Breast epithelium (tissue), 4 donors: ENCODE measurements at regions of chr7 and their contacts with region 1.

Region 1: DNA sequence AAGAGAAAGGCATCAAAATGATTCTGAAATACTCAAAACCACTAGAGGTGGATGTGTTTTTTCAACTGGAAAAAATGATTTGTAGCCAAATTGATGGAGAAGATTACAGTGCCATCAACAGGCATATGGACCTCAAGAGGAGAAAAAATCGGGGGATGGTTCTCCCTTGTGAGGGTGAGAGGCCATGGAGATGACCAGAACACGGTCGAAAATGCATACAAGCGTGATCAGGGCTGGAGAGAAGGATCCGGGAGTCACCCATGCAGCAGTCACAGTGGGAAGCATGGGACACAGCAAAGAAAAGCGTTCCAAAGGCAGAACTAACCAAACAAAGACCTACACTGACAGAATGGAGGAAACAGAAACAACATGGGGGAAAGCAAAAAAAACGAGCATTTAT is 80.3 kb downstream of the SLC37A3 start:
- DNase-seq: no peak
- H3K4me3 ChIP-seq: no peak overlapping the region
- H3K27ac ChIP-seq: no peak overlapping the region
- H3K4me1 ChIP-seq: peaks cover 0 to 5% of the 10 kb centered on the region in 2 donors
- H3K27me3 ChIP-seq: no peaks in the 10 kb centered on the region
- CTCF ChIP-seq: no peak
- POLR2A ChIP-seq: no peak

Region 2: GRCh38 chr7:140230861-140231770 is 86.9 kb before region 1 on chr7:
- intact Hi-C with region 1: no loop called
- DNase-seq: peak in 1 of 2 donors; percentile 36
- H3K4me3 ChIP-seq: peak overlapping the region; percentile 51 to 82 (median 58)
- H3K27ac ChIP-seq: peak overlapping the region; percentile 74 to 80
- H3K4me1 ChIP-seq: peaks cover 0 to 7% of the 10 kb centered on the region in 2 donors
- H3K27me3 ChIP-seq: no peaks in the 10 kb centered on the region
- CTCF ChIP-seq: no peak
- POLR2A ChIP-seq: no peak

Region 3: DNA sequence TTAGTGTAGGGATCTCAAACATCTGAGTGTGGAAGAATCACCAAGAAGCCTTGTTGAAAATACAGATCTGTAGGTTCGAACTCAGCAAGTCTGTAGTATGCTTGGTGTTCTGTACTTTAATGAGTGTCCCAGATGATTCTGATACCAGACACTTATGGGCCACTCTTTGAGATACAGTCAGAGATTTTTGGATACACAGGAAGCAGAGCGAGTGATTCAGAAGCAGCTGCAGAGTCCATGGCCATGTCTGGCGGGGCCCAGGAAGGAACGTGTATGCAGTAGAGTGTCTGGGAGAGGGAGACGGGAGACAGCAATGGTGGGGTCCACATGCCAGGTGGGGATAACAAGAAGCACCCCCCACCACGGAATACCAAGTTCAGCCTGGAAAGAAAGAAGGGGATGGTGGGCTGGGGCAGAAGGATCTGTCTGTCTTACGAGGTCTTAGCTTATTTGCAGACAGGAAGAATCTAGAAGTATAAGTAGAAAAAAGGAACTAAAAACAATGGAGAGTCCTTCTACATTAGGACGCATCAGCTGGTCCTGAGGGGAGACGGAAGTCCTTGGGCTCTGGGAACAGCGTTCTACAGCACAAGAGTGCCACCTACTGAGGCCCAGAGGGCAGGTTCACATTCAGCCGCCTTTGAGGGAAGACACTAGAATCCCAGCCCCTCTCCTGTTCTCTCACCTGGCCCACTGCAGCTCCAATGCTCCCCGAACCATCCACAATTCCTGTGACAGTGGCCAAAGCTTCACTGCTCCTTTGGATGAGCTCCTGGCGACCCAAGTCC is 24.9 kb after region 1 on chr7:
- intact Hi-C with region 1: loop called (anchors 1 kb)
- DNase-seq: no peak
- H3K4me3 ChIP-seq: no peak overlapping the region
- H3K27ac ChIP-seq: no peak overlapping the region
- H3K4me1 ChIP-seq: no peaks in the 10 kb centered on the region
- H3K27me3 ChIP-seq: no peaks in the 10 kb centered on the region
- CTCF ChIP-seq: no peak
- POLR2A ChIP-seq: no peak

Region 4: GRCh38 chr7:140525743-140526142 is 207.7 kb after region 1 on chr7:
- intact Hi-C with region 1: no loop called
- DNase-seq: peak in 1 of 2 donors; percentile 28
- H3K4me3 ChIP-seq: no peak overlapping the region
- H3K27ac ChIP-seq: no peak overlapping the region
- H3K4me1 ChIP-seq: no peaks in the 10 kb centered on the region
- H3K27me3 ChIP-seq: no peaks in the 10 kb centered on the region
- CTCF ChIP-seq: no peak
- POLR2A ChIP-seq: no peak